Gastrocnemius medialis (tissue), 4 donors: ENCODE measurements at regions of chr1 and their contacts with region 1.

Region 1: DNA sequence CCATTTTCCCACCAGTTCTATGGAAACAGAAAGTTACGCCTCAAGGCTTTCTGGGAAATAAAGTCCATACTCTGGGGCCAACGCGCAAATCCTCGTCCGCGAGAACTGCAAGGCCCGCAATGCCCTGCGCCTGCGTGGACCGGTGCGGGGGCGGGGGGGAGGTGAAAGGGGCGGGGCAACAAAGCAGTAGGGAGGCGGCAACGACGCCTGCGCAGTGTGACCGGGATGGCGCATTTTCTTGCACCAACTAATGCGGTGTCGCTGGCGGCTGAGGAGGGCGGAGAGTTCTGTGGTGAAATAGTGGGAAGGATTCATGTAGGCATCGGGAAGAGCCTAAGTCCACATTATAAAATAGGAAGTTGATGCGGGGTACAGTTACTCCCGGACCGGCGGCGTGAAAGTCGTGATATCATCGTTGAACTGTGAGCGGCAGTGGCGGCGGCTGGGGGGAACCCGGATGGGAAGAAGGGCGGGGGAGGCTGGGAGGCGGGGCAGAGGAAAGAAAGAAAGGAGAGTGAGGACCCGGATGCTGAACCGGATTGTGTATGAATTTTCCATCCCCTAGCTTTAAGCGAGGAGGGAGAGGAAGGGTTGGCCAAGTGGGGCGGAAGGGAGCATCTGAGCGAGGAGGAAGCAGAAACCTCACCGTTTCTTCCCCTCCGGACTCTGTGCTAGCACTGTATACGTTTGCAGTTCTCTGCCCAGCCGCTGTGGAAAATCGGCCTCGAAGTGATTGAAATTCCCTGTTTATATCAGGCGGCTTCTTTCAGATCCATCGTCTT is at the start of gene GGPS1:
- DNase-seq: peak; percentile 97 to 99
- ATAC-seq: peak; percentile 73 to 75
- H3K4me3 ChIP-seq: peak within 1 kb of the TSS; percentile 88 to 98 (median 95)
- H3K27ac ChIP-seq: peak within 1 kb of the TSS; percentile 94 to 98 (median 96)
- H3K4me1 ChIP-seq: peaks cover 57 to 61% of the 10 kb centered on the region in 2 donors
- H3K27me3 ChIP-seq: no peaks in the 10 kb centered on the region
- CTCF ChIP-seq: peak in 2 of 5 experiments; percentile 22 to 34
- POLR2A ChIP-seq: peak; percentile 74 to 81
- total RNA-seq, gene GGPS1: 14.5 to 21.9 (median 17.7) TPM

Region 2: GRCh38 chr1:235128456-235129328 is 199.9 kb before region 1 on chr1 and contains the start of gene TOMM20:
- in situ Hi-C with region 1: no loop called
- intact Hi-C with region 1: loop called (anchors 10 kb)
- DNase-seq: peak; percentile 93 to 98
- ATAC-seq: peak; percentile 97
- H3K4me3 ChIP-seq: peak within 1 kb of the TSS; percentile 90 to 95 (median 94)
- H3K27ac ChIP-seq: peak within 1 kb of the TSS; percentile 86 to 92 (median 88)
- H3K4me1 ChIP-seq: peaks cover 15 to 18% of the 10 kb centered on the region in 2 donors
- H3K27me3 ChIP-seq: no peaks in the 10 kb centered on the region
- CTCF ChIP-seq: peak in 1 of 5 experiments; percentile 10
- POLR2A ChIP-seq: peak; percentile 61 to 72
- total RNA-seq, gene TOMM20: 51.7 to 71.8 (median 62.3) TPM

Region 3: DNA sequence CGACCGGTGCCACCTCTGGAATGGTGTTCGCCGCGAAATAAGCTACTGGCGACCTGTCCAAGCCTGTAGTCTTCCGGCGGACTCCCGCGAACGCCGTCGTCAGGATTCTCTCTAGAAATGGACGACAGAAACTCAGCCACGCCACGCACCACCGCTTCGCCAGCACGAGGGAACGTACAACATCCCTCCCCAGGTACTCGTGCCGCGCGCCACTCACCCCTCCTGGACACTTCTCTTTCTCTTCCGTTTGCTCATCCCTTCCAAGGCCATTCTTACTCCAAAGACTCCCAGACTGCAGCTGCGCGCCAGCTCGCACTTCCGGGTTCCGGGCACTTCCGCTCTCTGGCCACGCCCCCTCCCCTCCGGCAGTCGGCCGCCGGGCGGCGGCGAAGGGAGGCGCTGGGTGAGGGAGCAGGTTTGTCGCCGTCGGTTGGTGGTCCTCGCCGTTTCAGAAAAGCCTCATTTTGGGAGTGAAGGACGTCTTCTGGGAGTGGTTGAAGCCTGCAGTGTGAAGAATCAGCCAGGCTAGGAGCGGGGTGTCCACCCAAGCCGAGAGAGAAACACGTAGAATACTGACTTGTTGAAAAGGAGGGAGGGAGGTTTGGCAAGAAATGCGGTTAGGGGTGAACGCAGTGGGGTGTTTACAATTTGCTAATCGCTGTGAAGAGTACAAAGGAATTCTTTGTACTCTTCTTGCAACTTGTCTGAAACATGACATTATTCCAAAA is 167.4 kb before region 1 on chr1 and contains the start of gene RBM34:
- in situ Hi-C with region 1: no loop called
- intact Hi-C with region 1: loop called (anchors 2 kb)
- DNase-seq: peak; percentile 83 to 89
- ATAC-seq: peak; percentile 97
- H3K4me3 ChIP-seq: peak within 1 kb of the TSS; percentile 81 to 94 (median 85)
- H3K27ac ChIP-seq: peak within 1 kb of the TSS; percentile 88 to 94 (median 88)
- H3K4me1 ChIP-seq: peaks cover 10 to 12% of the 10 kb centered on the region in 2 donors
- H3K27me3 ChIP-seq: no peaks in the 10 kb centered on the region
- CTCF ChIP-seq: peak in 3 of 5 experiments; percentile 36 to 55 (median 48)
- POLR2A ChIP-seq: peak; percentile 95 to 98
- total RNA-seq, gene RBM34: 44.8 to 136 (median 66.8) TPM

Region 4: DNA sequence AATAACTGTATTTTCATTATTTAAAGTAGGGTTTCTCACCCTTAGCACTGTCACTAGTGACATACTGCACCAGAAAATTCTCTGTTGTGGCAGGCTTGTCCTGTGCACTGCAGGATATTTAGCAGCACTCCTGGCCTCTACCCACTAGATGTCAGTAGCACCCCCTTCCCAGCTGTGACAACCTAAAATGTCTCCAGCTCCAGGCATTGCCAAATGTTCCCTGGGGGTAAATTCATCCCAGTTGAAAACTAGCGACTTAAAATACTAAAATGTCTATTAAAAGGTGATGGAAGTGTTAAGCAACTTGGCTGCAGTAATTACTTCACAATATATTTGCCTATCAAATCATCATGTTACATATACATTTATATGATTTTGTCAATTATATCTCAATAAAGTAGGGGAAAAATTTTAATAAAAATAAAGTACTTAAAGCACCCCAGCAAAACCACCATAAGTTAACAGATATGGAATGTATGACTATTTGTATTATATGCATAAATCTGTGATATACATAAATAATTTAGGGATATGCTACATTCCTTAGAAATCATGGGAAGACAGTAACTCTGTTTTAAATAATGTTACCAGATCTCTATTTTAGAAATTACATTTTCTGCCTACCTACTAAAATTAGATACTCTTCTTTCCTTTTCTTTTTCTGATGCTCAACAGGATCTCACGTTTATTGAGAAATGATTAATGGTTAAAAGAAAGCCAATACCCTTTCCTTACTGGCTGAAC is 75.2 kb before region 1 on chr1:
- in situ Hi-C with region 1: no loop called
- intact Hi-C with region 1: loop called (anchors 2 kb)
- DNase-seq: peak; percentile 28 to 66
- ATAC-seq: peak; percentile 95 to 99
- H3K4me3 ChIP-seq: no peak overlapping the region
- H3K27ac ChIP-seq: no peak overlapping the region
- H3K4me1 ChIP-seq: peaks cover 0 to 12% of the 10 kb centered on the region in 2 donors
- H3K27me3 ChIP-seq: no peaks in the 10 kb centered on the region
- CTCF ChIP-seq: peak; percentile 47 to 88 (median 81)
- POLR2A ChIP-seq: no peak

Region 5: GRCh38 chr1:235367000-235367908 is 38.7 kb after region 1 on chr1 and contains the start of gene TBCE:
- in situ Hi-C with region 1: no loop called
- intact Hi-C with region 1: loop called (anchors 1 kb)
- DNase-seq: peak; percentile 96 to 98
- ATAC-seq: peak; percentile 99 to 100
- H3K4me3 ChIP-seq: peak within 1 kb of the TSS; percentile 63 to 83 (median 76)
- H3K27ac ChIP-seq: peak within 1 kb of the TSS; percentile 85 to 93 (median 88)
- H3K4me1 ChIP-seq: peaks cover 2 to 4% of the 10 kb centered on the region in 2 donors
- H3K27me3 ChIP-seq: no peaks in the 10 kb centered on the region
- CTCF ChIP-seq: peak in 2 of 5 experiments; percentile 17 to 19
- POLR2A ChIP-seq: peak; percentile 86 to 94
- total RNA-seq, gene TBCE: 24.4 to 47.6 (median 29.2) TPM